Endothelial cell of umbilical vein (primary cell): ENCODE measurements at regions of chr20 and their contacts with region 1.

Region 1: GRCh38 chr20:57654363-57654997 is 34.3 kb upstream of the ZBP1 start:
- DNase-seq: peak; percentile 69
- H3K4me3 ChIP-seq: no peak overlapping the region
- H3K27ac ChIP-seq: no peak overlapping the region
- H3K4me1 ChIP-seq: no peaks in the 10 kb centered on the region
- H3K27me3 ChIP-seq: no peaks in the 10 kb centered on the region
- CTCF ChIP-seq: peak; percentile 82 to 85
- POLR2A ChIP-seq: no peak

Region 2: DNA sequence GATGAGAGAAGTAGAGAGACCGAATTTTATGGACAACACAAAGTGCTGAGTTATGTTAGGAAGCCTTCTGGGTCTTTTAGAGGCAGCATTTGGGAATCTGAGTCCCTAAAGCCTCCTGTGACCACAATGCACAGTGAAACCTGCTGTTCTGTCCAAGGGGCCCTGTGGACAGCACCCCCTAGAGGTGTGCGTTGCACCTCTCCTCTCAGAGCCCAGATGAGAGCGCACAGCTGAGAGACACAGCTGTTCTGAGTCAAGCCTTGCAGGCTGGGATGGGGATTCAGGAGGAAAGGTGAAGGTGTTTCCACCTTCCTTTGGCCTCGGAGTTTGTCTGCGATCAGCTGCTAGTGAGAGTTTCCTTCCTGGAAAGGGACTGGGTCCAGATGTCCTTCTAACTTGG is 80.6 kb before region 1 on chr20:
- CTCF ChIA-PET with region 1: no interaction called
- POLR2A ChIA-PET with region 1: no interaction called
- dilution Hi-C with region 1: no loop called
- intact Hi-C with region 1: no loop called
- DNase-seq: no peak
- H3K4me3 ChIP-seq: no peak overlapping the region
- H3K27ac ChIP-seq: no peak overlapping the region
- H3K4me1 ChIP-seq: no peaks in the 10 kb centered on the region
- H3K27me3 ChIP-seq: no peaks in the 10 kb centered on the region
- CTCF ChIP-seq: no peak
- POLR2A ChIP-seq: no peak

Region 3: GRCh38 chr20:57622579-57623377 is 31.7 kb before region 1 on chr20:
- CTCF ChIA-PET with region 1: interaction called, 51 read pairs
- POLR2A ChIA-PET with region 1: no interaction called
- dilution Hi-C with region 1: no loop called
- intact Hi-C with region 1: loop called (anchors 1 kb)
- DNase-seq: peak; percentile 58
- H3K4me3 ChIP-seq: no peak overlapping the region
- H3K27ac ChIP-seq: no peak overlapping the region
- H3K4me1 ChIP-seq: peaks cover 7% of the 10 kb centered on the region
- H3K27me3 ChIP-seq: no peaks in the 10 kb centered on the region
- CTCF ChIP-seq: peak; percentile 69 to 92
- POLR2A ChIP-seq: no peak

Region 4: DNA sequence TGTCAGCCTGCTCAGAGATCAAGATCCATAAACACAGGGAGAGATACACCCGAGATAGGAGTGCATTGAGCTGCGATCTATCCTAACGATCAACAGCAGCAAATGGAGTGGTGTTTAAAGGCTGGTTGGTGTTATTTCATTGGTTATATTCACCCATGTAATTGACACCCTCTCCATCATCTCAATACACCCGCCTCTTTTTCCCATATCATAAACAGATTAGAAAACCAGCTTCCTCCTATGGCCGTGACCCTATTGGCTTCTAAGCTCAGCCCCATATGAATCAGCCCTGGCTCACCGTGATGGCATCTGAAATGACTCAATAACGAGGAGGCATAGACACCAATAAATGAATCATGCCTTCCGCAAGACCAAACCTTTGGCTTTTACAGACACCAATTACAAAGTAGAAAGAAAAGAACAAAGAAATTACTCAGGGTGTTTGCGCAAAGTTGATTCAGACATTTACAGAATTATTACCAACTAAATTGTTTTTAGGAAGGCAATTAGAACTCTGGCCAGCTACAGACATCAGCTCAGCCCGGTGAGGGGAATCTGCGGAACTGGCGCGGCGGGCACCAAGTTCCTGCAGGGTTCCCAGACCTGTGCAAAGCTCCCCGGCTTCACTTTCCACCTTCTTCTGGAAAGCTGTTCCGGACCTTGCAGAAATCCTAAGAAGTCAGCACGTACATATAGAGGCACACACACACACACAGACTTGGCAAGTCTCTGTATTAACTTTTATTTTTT is 43.8 kb after region 1 on chr20:
- CTCF ChIA-PET with region 1: interaction called, 10 read pairs
- POLR2A ChIA-PET with region 1: no interaction called
- dilution Hi-C with region 1: no loop called
- intact Hi-C with region 1: loop called (anchors 1 kb)
- DNase-seq: peak; percentile 99
- H3K4me3 ChIP-seq: peak overlapping the region in 1 of 3 experiments; percentile 25
- H3K27ac ChIP-seq: peak overlapping the region; percentile 80
- H3K4me1 ChIP-seq: peaks cover 30% of the 10 kb centered on the region
- H3K27me3 ChIP-seq: no peaks in the 10 kb centered on the region
- CTCF ChIP-seq: no peak
- POLR2A ChIP-seq: peak; percentile 68

Region 5: DNA sequence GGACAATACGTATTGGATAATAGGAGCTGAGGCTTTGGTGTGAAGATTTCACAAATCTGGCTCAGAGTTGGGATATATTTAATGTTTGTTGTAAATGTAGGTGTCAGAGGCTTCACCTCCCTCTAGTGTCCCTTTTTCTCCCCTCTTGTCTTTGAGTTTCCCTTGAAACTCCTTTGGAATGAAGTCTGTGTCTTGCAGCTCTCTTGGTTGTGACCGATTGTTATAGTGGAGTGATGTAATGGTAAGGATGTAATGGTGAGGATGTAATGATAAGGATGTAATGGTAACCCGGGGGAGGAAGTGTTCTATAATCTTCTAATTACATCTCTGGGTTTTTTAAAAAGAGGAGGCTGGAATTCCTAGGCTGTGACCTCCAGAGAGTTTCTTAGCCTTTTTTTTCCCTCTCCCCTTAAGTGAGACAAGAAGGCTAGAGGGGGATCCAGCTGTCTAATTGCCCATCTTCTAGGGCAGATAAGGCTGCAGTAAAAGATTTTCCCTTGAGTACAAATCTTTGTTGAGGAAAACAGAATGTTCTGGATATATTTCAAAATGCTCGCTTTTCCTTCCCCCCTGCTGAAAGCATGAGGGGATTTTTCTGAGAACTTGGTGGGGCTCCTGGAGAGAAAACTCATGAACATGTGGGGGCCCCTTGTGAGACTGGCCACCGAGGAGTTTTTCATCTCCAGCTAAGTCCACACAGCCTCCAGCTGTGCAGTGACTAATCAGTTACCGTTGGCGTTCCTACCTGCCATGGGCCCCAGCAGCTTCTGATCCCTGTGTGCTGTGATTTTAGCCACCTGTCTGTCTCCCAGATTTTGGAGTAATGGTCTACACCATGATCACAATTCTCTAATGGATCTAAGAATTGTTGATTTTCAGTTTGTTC is 212.0 kb after region 1 on chr20:
- CTCF ChIA-PET with region 1: interaction called, 4 read pairs
- POLR2A ChIA-PET with region 1: no interaction called
- dilution Hi-C with region 1: no loop called
- intact Hi-C with region 1: loop called (anchors 10 kb)
- DNase-seq: no peak
- H3K4me3 ChIP-seq: no peak overlapping the region
- H3K27ac ChIP-seq: no peak overlapping the region
- H3K4me1 ChIP-seq: no peaks in the 10 kb centered on the region
- H3K27me3 ChIP-seq: peaks cover 0 to 9% of the 10 kb centered on the region in 2 experiments
- CTCF ChIP-seq: no peak
- POLR2A ChIP-seq: no peak

Region 6: DNA sequence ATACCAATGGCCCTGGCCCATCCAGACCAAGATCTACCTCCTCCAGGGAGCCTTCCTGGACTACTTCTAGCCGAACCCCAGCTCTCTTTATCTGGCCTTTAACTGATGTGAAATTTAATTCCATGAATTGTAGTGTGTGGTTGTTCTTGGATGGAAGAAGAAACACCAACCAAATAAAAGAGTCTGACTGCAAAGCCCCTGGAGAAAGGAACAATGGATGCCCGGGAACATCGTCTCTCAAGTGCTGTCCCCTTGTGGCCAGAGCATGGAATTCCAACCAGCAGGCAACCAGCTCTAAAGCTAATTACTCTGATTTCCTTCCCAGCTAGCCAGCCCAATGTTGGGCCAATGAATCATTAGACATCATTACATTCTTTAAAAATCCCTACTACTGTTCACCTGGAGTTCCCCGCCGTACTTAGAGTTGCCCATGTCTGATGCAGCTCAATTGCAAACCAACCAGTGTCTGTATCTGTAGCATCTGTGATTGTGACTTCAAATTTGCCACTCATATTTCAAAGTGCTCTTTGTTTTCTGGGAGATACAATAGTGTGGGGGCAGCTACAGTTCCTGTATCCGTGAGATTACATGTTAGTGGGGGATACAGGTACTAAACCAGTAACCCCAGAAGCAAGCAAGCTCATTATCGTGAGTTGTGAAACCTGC is 432.8 kb after region 1 on chr20:
- CTCF ChIA-PET with region 1: interaction called, 89 read pairs
- POLR2A ChIA-PET with region 1: no interaction called
- dilution Hi-C with region 1: loop called (anchors 25 kb)
- intact Hi-C with region 1: loop called (anchors 1 kb)
- DNase-seq: peak; percentile 62
- H3K4me3 ChIP-seq: no peak overlapping the region
- H3K27ac ChIP-seq: no peak overlapping the region
- H3K4me1 ChIP-seq: no peaks in the 10 kb centered on the region
- H3K27me3 ChIP-seq: no peaks in the 10 kb centered on the region
- CTCF ChIP-seq: peak; percentile 90 to 97
- POLR2A ChIP-seq: no peak

Region 7: DNA sequence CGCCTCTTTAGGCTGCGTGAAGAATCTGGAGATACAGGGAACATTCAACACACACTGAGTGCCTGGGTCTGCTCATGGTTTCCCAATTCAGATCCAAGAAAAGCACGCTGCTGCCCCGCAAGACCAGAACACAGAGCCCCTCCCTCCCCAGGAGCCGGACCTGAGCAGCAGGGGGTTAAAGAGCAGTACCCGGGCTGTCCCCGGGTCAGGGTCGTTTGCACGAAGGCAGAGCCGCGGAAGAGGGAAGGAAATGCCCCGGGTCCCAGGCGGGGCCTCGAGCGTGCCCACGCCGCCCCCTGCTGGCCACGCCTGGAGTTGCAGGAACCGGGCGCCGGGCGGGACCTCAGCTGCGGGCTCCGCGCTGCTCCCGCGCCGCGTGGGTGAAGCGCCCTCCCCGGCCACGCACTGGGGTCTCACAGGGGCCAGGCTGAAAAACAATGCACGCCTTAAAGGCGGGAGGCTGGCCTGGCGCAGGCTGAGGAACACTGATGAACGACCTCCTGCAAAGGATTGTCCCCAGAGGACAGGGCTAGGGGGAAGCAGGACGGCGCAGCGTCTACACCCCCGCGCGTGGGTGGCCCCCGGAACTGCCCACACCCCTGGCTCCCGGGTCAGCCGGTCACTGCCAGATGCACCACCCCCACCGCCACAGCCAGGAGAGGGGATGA is 525.1 kb after region 1 on chr20:
- CTCF ChIA-PET with region 1: interaction called, 28 read pairs
- POLR2A ChIA-PET with region 1: no interaction called
- dilution Hi-C with region 1: no loop called
- intact Hi-C with region 1: loop called (anchors 1 kb)
- DNase-seq: peak; percentile 30
- H3K4me3 ChIP-seq: no peak overlapping the region
- H3K27ac ChIP-seq: no peak overlapping the region
- H3K4me1 ChIP-seq: no peaks in the 10 kb centered on the region
- H3K27me3 ChIP-seq: peaks cover 3 to 6% of the 10 kb centered on the region in 2 experiments
- CTCF ChIP-seq: peak; percentile 95 to 97
- POLR2A ChIP-seq: no peak